Heart right ventricle (tissue), 16 donors: ENCODE measurements at regions of chr10 and their contacts with region 1.

Region 1: GRCh38 chr10:70404036-70404786 is at the start of gene EIF4EBP2:
- DNase-seq: peak; percentile 99
- ATAC-seq: peak; percentile 94 to 97 (median 96)
- H3K4me3 ChIP-seq: peak within 1 kb of the TSS; percentile 68 to 99 (median 93)
- H3K27ac ChIP-seq: peak within 1 kb of the TSS; percentile 89 to 100 (median 98)
- H3K4me1 ChIP-seq: peaks cover 9 to 43% (median 38%) of the 10 kb centered on the region in 9 donors
- H3K27me3 ChIP-seq: no peaks in the 10 kb centered on the region
- CTCF ChIP-seq: no peak
- total RNA-seq, gene EIF4EBP2: 70.1 to 128 (median 81.9) TPM

Region 2: GRCh38 chr10:70381471-70382421 is 22.5 kb before region 1 on chr10:
- intact Hi-C with region 1: loop called in 2 of 10 experiments (anchors 2 kb)
- DNase-seq: peak; percentile 53 to 62
- ATAC-seq: peak; percentile 23 to 79 (median 68)
- H3K4me3 ChIP-seq: peak overlapping the region; percentile 53 to 99 (median 88)
- H3K27ac ChIP-seq: peak overlapping the region; percentile 26 to 92 (median 87)
- H3K4me1 ChIP-seq: peaks cover 0 to 52% (median 26%) of the 10 kb centered on the region in 9 donors
- H3K27me3 ChIP-seq: peaks cover 0 to 10% (median 0%) of the 10 kb centered on the region in 7 donors
- CTCF ChIP-seq: no peak

Region 3: GRCh38 chr10:70430493-70431445 is 26.6 kb after region 1 on chr10:
- intact Hi-C with region 1: loop called in 1 of 10 experiments (anchors 2 kb)
- DNase-seq: peak; percentile 34 to 89
- ATAC-seq: peak; percentile 77 to 91 (median 85)
- H3K4me3 ChIP-seq: no peak overlapping the region
- H3K27ac ChIP-seq: peak overlapping the region; percentile 64 to 89 (median 79)
- H3K4me1 ChIP-seq: peaks cover 12 to 58% (median 49%) of the 10 kb centered on the region in 9 donors
- H3K27me3 ChIP-seq: no peaks in the 10 kb centered on the region
- CTCF ChIP-seq: peak in 7 of 9 donors; percentile 8 to 69 (median 45)

Region 4: GRCh38 chr10:70508912-70509756 is 104.9 kb after region 1 on chr10:
- intact Hi-C with region 1: loop called in 1 of 10 experiments (anchors 10 kb)
- DNase-seq: peak; percentile 64 to 76
- ATAC-seq: peak; percentile 70 to 87 (median 86)
- H3K4me3 ChIP-seq: peak overlapping the region in 2 of 10 donors; percentile 16 to 24
- H3K27ac ChIP-seq: peak overlapping the region in 9 of 10 donors; percentile 54 to 87 (median 73)
- H3K4me1 ChIP-seq: peaks cover 29 to 81% (median 58%) of the 10 kb centered on the region in 9 donors
- H3K27me3 ChIP-seq: no peaks in the 10 kb centered on the region
- CTCF ChIP-seq: peak in 4 of 9 donors; percentile 6 to 17 (median 8)